ENCODE measurements at regions of chr12 and their contacts with region 1.

Region 1: GRCh38 chr12:6662906-6663742 is at the start of gene ING4:
- DNase-seq: peak; percentile 99
- H3K4me3 Mint-ChIP-seq: peak within 1 kb of the TSS; percentile 98
- H3K27ac Mint-ChIP-seq: peak within 1 kb of the TSS; percentile 96
- H3K4me1 Mint-ChIP-seq: peaks cover 21% of the 10 kb centered on the region
- H3K27me3 Mint-ChIP-seq: peaks cover 2% of the 10 kb centered on the region
- total RNA-seq, gene ING4: 13.7 and 15.8 TPM in 2 replicates

Region 2: GRCh38 chr12:6493497-6494257 is 169.4 kb before region 1 on chr12 and contains the start of gene NCAPD2:
- intact Hi-C with region 1: loop called (anchors 1 kb)
- DNase-seq: peak; percentile 99
- H3K4me3 Mint-ChIP-seq: peak within 1 kb of the TSS; percentile 95
- H3K27ac Mint-ChIP-seq: peak within 1 kb of the TSS; percentile 98
- H3K4me1 Mint-ChIP-seq: peaks cover 34% of the 10 kb centered on the region
- H3K27me3 Mint-ChIP-seq: no peaks in the 10 kb centered on the region
- total RNA-seq, gene NCAPD2: 104 and 106 TPM in 2 replicates

Region 3: GRCh38 chr12:6607751-6608591 is 55.2 kb before region 1 on chr12:
- intact Hi-C with region 1: loop called (anchors 1 kb)
- DNase-seq: peak; percentile 89
- H3K4me3 Mint-ChIP-seq: no peak overlapping the region
- H3K27ac Mint-ChIP-seq: no peak overlapping the region
- H3K4me1 Mint-ChIP-seq: peaks cover 45% of the 10 kb centered on the region
- H3K27me3 Mint-ChIP-seq: no peaks in the 10 kb centered on the region

Region 4: DNA sequence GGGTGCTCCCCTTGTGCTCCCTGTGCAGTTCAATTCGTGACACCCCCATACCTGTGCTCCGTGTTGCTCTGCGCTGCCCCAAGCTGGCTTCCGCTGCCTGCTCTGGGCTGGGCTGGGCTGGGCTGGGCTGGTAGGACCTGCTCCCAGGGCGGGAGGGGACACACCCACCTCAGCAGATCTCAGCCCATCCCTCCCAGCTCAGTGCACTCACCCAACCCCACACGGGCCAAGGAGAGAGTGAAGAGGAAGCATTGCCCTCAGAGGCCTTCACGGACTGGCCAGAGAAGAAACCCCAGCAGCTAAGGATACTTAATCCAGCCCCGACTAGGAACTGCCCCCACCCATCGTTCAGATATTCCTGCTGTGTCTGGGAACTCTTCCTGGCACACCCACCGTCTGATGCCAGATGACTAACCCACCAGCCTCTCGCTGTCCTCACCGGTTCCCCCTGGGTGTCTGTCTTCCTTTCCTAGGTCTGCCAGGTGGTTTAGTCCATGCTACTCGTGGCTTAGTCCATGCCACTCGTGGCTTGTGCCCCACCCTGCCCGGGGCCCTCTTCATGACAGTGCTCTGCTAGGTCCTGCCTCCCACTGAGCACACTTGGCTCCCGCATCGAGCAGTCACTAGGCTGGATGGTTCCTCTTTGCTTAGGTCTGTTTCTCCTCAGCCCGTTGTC is 27.1 kb before region 1 on chr12 and contains the start of gene LPAR5:
- intact Hi-C with region 1: loop called (anchors 1 kb)
- DNase-seq: no peak
- H3K4me3 Mint-ChIP-seq: peak within 1 kb of the TSS; percentile 56
- H3K27ac Mint-ChIP-seq: peak within 1 kb of the TSS; percentile 87
- H3K4me1 Mint-ChIP-seq: peaks cover 42% of the 10 kb centered on the region
- H3K27me3 Mint-ChIP-seq: peaks cover 1% of the 10 kb centered on the region
- total RNA-seq, gene LPAR5: 3.3 and 4.2 TPM in 2 replicates

Region 5: DNA sequence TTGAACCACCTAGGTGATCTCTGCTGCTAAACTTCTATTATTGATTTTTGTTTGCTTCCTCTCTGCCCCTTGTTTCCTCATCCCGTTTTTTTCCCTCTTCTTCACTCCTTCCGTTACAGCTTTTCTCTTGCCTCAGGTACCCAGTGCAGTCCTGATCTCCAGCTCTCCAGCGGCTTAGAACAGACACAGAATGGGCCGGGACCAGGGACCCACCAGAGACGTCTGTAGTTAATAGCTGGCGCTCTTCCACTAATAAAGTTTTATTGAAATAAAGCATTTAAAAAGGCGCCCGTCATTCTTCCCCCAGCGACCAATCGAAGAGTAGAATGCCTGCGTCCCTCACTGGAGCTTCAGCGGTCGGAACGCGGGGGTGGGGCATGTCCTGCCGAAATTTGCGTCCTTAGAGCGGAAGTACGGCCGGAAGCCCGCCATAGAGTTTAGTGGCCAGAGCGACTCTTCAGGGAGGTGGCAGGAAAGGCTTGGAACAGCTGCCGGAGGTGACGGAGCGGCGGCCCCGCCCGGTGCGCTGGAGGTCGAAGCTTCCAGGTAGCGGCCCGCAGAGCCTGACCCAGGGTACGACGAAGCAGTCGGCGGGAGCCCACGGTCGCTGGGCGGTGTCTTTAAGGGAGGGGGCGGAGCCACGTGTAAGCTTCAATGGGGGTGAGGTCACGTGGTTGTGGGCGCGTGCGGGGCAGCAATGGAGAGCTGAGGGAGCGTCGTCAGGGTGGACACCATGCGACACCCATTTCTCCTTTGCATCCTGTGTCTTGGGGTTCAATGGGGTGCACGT is 60.7 kb after region 1 on chr12 and contains the start of gene COPS7A:
- intact Hi-C with region 1: loop called (anchors 1 kb)
- DNase-seq: peak; percentile 99
- H3K4me3 Mint-ChIP-seq: peak within 1 kb of the TSS; percentile 89
- H3K27ac Mint-ChIP-seq: peak within 1 kb of the TSS; percentile 98
- H3K4me1 Mint-ChIP-seq: peaks cover 27% of the 10 kb centered on the region
- H3K27me3 Mint-ChIP-seq: peaks cover 3% of the 10 kb centered on the region
- total RNA-seq, gene COPS7A: 39.5 and 44.8 TPM in 2 replicates

Measured in activated CD4-positive, alpha-beta T cell treated with anti-CD3 and anti-CD28 coated beads, Interleukin-2, amount 10 ng/mL, durations not matched to agents 24 days and 14 days (primary cell).